Esophagus muscularis mucosa (tissue), 4 donors: ENCODE measurements at regions of chr6 and their contacts with region 1.

Region 1: DNA sequence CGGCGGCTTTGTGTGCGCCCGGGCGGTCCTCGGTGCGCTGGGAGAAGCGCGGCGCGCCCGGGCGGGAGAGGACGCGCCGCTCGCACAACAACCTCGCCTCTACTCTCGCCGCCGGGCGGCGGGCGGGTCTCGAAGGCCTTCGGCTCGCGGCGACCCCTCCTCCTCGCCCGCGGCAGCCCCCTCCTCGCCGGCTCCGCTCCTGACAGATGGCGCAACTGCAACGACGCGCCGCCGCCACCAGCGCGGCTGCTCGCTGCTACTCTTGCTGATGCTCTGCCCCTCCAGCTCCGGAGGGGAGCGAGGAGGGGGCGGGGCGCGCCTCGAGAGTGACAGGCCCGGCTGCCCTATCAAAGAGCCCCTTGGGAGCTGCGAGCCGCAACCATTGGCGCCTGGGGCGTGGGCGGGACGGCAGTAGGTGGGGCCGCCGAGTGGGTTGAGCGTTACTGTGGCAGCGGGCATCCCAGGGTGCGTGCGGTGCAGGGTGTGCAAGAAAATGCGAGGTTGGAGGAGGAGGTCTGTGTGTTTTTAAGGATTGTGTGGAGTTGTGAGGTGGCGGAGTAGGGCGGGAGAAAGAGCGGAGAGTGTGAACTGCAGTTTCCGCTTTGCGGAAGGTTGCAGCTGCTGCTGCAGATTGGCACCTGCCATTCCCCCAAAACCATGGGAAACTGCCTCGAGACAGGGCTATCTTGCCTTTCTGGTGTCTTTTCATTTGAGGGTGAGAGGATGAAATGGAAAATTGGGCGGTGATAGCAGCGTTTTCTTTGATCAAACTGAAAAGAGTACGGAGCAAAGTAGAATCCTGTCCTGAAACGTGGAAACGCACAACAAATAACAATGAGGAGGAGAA is at the start of gene FYN:
- DNase-seq: peak; percentile 99
- H3K4me3 ChIP-seq: peak within 1 kb of the TSS; percentile 71 to 84 (median 73)
- H3K27ac ChIP-seq: peak within 1 kb of the TSS; percentile 68 to 84 (median 80)
- H3K4me1 ChIP-seq: peaks cover 3 to 29% (median 24%) of the 10 kb centered on the region in 4 donors
- H3K27me3 ChIP-seq: peaks cover 0 to 14% (median 0%) of the 10 kb centered on the region in 4 donors
- CTCF ChIP-seq: peak; percentile 31 to 66 (median 41)
- EP300 ChIP-seq: no peak
- POLR2A ChIP-seq: peak; percentile 59
- total RNA-seq, gene FYN: 37.8 to 65.8 (median 53.8) TPM

Region 2: GRCh38 chr6:111709615-111710398 is 163.6 kb before region 1 on chr6:
- intact Hi-C with region 1: loop called (anchors 10 kb)
- DNase-seq: no peak
- H3K4me3 ChIP-seq: peak overlapping the region in 2 of 4 donors; percentile 17 to 27
- H3K27ac ChIP-seq: peak overlapping the region in 1 of 4 donors; percentile 14
- H3K4me1 ChIP-seq: peaks cover 28 to 32% (median 32%) of the 10 kb centered on the region in 4 donors
- H3K27me3 ChIP-seq: no peaks in the 10 kb centered on the region
- CTCF ChIP-seq: peak; percentile 78 to 92 (median 79)
- EP300 ChIP-seq: no peak
- POLR2A ChIP-seq: no peak